Esophagus squamous epithelium (tissue), 5 donors: ENCODE measurements at regions of chr3 and their contacts with region 1.

Region 1: DNA sequence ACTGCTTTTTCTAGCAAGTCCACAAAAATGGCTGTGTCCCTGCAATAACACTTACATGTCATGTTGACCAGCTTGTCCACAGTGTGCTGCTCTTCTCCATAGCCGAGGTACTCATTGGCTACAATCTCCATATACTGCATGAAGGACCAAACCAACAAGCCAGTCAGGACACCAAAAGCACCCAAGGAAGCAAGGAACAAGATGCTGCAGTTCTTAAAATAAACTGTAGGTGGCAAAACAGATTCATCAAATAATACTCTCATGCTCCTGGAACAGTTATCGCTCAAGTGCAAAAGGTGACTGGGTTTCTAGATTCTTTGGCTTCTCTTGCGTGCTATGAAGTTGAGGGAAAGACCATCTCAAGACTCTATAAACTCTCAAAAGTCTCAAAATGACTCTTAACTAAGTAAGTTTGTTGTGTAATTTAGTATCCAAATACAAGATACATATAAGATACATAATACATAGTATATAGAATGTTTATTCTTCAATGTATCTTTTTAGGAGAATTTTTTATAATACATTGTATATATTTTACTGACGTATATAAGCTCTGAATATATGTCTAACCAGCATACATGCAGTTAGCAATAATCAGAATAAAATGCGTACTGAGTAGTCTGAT is 57.0 kb downstream of the NEK10 start:
- DNase-seq: no peak
- H3K4me3 ChIP-seq: no peak overlapping the region
- H3K27ac ChIP-seq: no peak overlapping the region
- H3K4me1 ChIP-seq: peaks cover 0 to 5% (median 0%) of the 10 kb centered on the region in 3 donors
- H3K27me3 ChIP-seq: no peaks in the 10 kb centered on the region
- CTCF ChIP-seq: peak; percentile 71 to 91 (median 82)
- POLR2A ChIP-seq: no peak

Region 2: GRCh38 chr3:27467545-27467944 is 155.4 kb after region 1 on chr3:
- intact Hi-C with region 1: loop called (anchors 5 kb)
- DNase-seq: no peak
- H3K4me3 ChIP-seq: peak overlapping the region in 1 of 4 donors; percentile 22
- H3K27ac ChIP-seq: peak overlapping the region in 2 of 4 donors; percentile 5 to 18
- H3K4me1 ChIP-seq: peaks cover 6 to 40% (median 7%) of the 10 kb centered on the region in 3 donors
- H3K27me3 ChIP-seq: no peaks in the 10 kb centered on the region
- CTCF ChIP-seq: peak in 5 of 6 experiments; percentile 46 to 69 (median 53)
- POLR2A ChIP-seq: no peak

Region 3: DNA sequence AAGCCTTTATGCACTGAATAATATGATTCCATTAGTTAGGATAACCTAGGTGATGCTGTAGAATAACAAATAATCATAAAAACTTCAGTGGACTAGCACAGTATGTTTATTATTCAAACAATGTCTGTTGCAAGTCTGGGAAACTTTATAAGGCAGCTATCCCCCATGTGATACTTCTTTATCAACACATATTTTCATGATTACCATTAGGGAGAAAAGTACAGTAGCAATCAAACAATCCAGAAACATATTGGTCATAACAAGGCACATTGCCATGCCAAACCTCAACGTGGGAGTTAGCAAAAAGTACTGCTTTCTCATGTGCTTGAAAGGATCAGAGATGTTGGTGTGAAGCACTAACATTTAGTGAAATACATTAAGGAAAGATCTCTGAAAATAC is 374.5 kb after region 1 on chr3:
- intact Hi-C with region 1: loop called (anchors 5 kb)
- DNase-seq: no peak
- H3K4me3 ChIP-seq: no peak overlapping the region
- H3K27ac ChIP-seq: no peak overlapping the region
- H3K4me1 ChIP-seq: no peaks in the 10 kb centered on the region
- H3K27me3 ChIP-seq: no peaks in the 10 kb centered on the region
- CTCF ChIP-seq: no peak
- POLR2A ChIP-seq: no peak